Aorta (tissue), 5 donors: ENCODE measurements at regions of chr11 and their contacts with region 1.

Region 1: GRCh38 chr11:76680518-76681425 is 10.2 kb upstream of the LRRC32 start:
- DNase-seq: peak; percentile 79 to 88
- ATAC-seq: peak; percentile 81
- H3K4me3 ChIP-seq: no peak overlapping the region
- H3K27ac ChIP-seq: no peak overlapping the region
- H3K4me1 ChIP-seq: no peaks in the 10 kb centered on the region
- H3K27me3 ChIP-seq: no peaks in the 10 kb centered on the region

Region 2: DNA sequence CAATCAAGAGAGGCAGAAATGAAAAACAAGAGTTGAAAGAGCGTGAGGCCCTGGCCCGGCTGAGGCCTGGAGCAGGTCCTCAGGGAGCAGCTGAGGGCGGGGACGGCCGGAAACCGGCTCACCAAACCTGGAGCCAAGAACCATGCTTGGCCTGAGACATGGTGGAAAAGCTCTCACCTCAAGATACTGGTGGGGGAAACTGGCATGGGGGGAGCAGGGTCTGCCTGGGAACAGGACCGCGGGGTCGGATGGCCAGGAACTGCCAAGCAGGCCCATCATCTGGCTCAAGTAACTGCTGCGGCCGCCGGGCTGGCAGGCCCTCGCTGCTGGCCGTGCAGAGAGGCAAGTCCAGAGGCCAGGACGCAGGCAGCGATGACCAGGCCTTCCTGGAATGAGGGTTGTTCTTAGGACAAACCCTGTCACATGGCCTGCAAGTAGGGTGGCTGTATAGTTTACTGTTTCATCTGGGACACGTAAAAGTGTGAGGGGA is 455.6 kb before region 1 on chr11:
- intact Hi-C with region 1: loop called in 1 of 2 experiments (anchors 10 kb)
- DNase-seq: peak in 1 of 2 donors; percentile 83
- ATAC-seq: peak; percentile 85
- H3K4me3 ChIP-seq: no peak overlapping the region
- H3K27ac ChIP-seq: no peak overlapping the region
- H3K4me1 ChIP-seq: no peaks in the 10 kb centered on the region
- H3K27me3 ChIP-seq: no peaks in the 10 kb centered on the region

Region 3: DNA sequence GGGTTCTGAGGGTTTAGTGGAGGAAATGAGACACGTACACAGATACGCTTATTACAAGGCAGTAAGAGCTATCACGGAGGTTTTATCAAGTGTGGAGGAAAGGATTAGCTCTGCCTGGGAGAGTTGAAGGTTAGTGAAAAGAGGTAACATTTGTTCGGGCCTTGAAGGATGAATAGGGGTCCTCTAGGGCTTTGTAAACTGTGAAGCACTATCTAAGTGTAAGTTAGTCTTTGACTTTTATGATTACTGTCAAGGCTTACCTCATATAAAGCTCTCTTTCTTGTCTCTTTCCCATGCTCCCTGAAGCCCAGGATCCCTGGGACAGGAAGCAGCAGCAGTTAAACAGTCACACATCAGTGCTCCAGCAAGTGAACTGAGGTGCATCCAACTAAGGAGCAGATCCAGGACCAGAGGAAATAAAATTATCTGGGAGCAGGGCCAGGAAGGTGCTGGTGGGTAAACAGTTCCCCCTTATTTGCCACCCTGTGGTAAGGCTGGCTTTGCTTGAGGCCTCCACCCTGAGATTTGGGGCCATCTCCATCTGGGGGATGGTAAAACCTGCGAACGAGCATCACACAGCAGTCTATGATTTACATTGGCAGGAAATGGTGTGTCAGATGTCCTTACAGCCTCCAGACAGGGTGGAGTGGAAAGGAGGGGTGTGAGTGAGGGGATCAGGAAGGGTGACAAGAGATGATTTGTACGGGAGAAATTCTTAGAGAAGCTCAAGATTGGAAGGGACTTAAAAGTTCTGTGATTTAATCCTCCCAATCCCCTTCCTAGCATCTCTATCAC is 272.4 kb before region 1 on chr11:
- intact Hi-C with region 1: no loop called
- DNase-seq: no peak
- ATAC-seq: no peak
- H3K4me3 ChIP-seq: no peak overlapping the region
- H3K27ac ChIP-seq: no peak overlapping the region
- H3K4me1 ChIP-seq: no peaks in the 10 kb centered on the region
- H3K27me3 ChIP-seq: no peaks in the 10 kb centered on the region

Region 4: DNA sequence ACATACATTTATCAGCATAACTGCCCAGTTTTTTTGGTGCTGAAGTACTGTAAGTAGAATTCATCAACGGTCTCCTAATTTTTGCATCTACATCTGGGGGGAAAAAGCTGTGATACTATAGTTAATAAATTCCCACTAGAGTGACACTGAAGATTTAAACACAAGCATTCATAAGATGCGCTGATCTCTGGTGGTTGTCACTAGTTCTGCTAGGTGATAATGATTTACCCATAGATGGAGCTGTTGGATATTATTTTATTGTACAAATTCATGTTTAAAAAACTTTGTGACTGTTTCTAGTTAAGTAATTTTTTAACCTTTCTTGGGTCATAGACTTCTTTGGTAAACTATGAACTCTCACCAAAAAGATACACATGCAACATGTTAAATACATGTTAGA is 129.4 kb before region 1 on chr11:
- intact Hi-C with region 1: loop called (anchors 2 kb)
- DNase-seq: no peak
- ATAC-seq: no peak
- H3K4me3 ChIP-seq: no peak overlapping the region
- H3K27ac ChIP-seq: no peak overlapping the region
- H3K4me1 ChIP-seq: no peaks in the 10 kb centered on the region
- H3K27me3 ChIP-seq: no peaks in the 10 kb centered on the region

Region 5: DNA sequence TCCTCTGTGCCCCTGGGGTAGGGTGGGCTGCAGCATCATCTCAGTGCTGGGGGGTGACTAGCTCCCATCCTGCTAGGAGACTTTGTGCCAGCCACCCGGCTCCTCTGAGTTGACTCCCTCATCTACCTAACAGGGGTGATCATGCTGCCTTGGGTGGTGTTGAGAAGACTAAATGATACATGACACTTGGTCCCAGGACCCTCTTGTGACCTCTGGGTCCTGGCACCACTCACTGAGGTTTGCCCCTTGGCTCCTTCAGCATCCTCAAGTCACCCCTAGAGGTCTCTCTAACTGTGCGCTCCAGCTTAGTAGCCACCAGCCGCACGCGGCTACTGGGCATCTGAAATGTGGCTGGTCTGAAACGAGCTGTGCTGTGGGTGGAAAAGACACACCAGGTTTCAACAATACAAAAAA is 82.3 kb before region 1 on chr11:
- intact Hi-C with region 1: loop called (anchors 2 to 5 kb)
- DNase-seq: peak; percentile 62 to 77
- ATAC-seq: peak; percentile 66
- H3K4me3 ChIP-seq: no peak overlapping the region
- H3K27ac ChIP-seq: no peak overlapping the region
- H3K4me1 ChIP-seq: no peaks in the 10 kb centered on the region
- H3K27me3 ChIP-seq: no peaks in the 10 kb centered on the region

Region 6: GRCh38 chr11:76623171-76623883 is 57.4 kb before region 1 on chr11:
- intact Hi-C with region 1: no loop called
- DNase-seq: peak; percentile 64 to 74
- ATAC-seq: no peak
- H3K4me3 ChIP-seq: no peak overlapping the region
- H3K27ac ChIP-seq: no peak overlapping the region
- H3K4me1 ChIP-seq: no peaks in the 10 kb centered on the region
- H3K27me3 ChIP-seq: no peaks in the 10 kb centered on the region